Activated CD4-positive, alpha-beta memory T cell treated with anti-CD3 and anti-CD28 coated beads for 36 hours (primary cell): ENCODE measurements at regions of chr3 and their contacts with region 1.

Region 1: GRCh38 chr3:101936419-101937356 is 87.4 kb downstream of the NFKBIZ start:
- DNase-seq: peak; percentile 65
- H3K4me3 Mint-ChIP-seq: peak overlapping the region; percentile 36
- H3K27ac Mint-ChIP-seq: peak overlapping the region; percentile 50
- H3K4me1 Mint-ChIP-seq: peaks cover 25% of the 10 kb centered on the region
- H3K27me3 Mint-ChIP-seq: peaks cover 15% of the 10 kb centered on the region

Region 2: DNA sequence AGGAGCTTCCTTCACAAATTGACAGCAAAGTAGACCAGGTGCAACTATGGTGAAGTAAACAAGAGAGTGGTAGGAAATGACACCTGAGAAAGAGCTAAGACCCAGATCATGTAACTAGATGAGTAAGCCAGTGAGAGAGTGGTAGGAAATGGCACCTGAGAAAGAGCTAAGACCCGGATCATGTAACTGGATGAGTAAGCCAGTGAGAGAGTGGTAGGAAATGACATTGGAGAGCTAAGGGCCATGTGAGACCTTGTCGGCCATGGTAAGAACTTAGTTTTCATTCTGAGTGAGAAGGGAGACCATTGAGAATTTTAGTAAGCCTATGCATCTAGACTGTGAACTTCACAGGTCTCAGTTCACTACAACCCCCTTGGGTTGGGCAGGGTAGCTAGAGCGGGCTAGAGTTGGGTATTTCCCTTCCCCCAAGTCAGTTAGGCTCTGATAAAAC is 418.2 kb before region 1 on chr3:
- CTCF ChIA-PET with region 1: no interaction called
- POLR2A ChIA-PET with region 1: no interaction called
- intact Hi-C with region 1: loop called (anchors 5 kb)
- DNase-seq: peak; percentile 69
- H3K4me3 Mint-ChIP-seq: peak overlapping the region; percentile 65
- H3K27ac Mint-ChIP-seq: peak overlapping the region; percentile 93
- H3K4me1 Mint-ChIP-seq: peaks cover 48% of the 10 kb centered on the region
- H3K27me3 Mint-ChIP-seq: no peaks in the 10 kb centered on the region

Region 3: DNA sequence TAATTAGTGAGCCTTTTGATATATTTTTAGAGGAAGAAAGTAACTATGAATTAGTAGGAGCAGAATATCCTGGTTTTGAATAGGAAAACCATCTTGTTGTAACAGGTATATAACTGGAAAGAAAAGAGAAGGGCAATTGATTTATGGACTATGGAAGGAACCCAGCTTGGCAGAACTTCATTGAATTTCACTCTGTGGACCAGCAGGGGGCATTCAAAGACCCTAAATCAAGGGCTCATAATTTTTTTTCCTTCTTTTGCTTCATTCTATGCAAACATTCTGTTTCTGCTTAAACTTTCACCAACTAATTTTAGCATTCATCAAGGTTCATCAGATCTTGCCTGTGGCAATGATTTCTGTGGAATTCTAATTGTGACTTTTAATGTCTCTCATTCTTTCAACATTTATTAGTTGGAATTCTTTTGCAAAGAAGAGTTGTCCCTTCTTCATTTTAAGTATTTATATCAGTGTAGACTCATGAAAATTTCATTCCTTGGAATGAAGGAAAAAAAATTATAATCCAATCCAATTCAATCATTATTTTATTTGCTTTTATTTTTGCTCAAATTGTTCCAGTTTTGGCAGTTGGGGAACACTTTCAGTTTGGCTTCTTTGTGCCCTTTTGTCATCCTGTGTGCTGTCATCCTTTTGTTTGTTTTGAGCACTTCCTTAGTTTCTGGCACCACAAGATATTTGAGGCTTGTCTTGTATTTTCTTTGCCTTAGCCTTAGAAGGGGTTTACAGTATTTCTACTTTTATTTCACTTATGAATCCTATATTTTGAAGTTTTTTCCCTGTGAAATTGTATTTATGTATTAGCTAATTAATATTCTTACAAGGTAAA is 127.3 kb before region 1 on chr3:
- CTCF ChIA-PET with region 1: interaction called, 3 read pairs
- POLR2A ChIA-PET with region 1: no interaction called
- intact Hi-C with region 1: loop called (anchors 2 kb)
- DNase-seq: peak; percentile 31
- H3K4me3 Mint-ChIP-seq: no peak overlapping the region
- H3K27ac Mint-ChIP-seq: no peak overlapping the region
- H3K4me1 Mint-ChIP-seq: peaks cover 43% of the 10 kb centered on the region
- H3K27me3 Mint-ChIP-seq: no peaks in the 10 kb centered on the region

Region 4: DNA sequence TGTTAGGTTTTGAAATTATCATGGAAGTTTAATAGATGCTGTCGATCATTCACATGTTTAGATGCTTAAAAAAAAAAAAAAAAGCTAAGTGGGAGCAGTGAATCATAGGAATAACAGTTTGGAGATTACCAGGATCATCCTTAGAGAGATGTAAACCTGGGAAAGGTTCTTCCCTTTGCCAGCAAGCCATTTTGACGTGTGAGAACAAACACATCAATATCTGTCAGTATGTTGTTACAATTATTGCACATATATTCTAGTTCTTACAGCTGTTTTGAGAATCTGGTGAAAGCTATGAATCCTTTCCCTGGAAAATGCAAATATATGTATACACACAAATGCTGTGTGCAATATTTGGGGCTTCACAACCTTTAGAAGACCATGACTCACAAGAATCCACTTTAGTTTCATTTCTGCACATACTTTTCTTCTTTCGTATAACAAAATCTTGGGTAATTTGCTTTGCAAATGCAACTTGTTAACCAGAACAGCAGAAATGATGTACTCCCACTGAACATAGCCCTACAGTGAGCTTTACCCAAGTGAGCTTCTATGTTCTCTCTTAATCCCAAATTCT is 75.4 kb before region 1 on chr3:
- CTCF ChIA-PET with region 1: no interaction called
- POLR2A ChIA-PET with region 1: no interaction called
- intact Hi-C with region 1: loop called (anchors 1 kb)
- DNase-seq: no peak
- H3K4me3 Mint-ChIP-seq: no peak overlapping the region
- H3K27ac Mint-ChIP-seq: no peak overlapping the region
- H3K4me1 Mint-ChIP-seq: peaks cover 64% of the 10 kb centered on the region
- H3K27me3 Mint-ChIP-seq: no peaks in the 10 kb centered on the region

Region 5: DNA sequence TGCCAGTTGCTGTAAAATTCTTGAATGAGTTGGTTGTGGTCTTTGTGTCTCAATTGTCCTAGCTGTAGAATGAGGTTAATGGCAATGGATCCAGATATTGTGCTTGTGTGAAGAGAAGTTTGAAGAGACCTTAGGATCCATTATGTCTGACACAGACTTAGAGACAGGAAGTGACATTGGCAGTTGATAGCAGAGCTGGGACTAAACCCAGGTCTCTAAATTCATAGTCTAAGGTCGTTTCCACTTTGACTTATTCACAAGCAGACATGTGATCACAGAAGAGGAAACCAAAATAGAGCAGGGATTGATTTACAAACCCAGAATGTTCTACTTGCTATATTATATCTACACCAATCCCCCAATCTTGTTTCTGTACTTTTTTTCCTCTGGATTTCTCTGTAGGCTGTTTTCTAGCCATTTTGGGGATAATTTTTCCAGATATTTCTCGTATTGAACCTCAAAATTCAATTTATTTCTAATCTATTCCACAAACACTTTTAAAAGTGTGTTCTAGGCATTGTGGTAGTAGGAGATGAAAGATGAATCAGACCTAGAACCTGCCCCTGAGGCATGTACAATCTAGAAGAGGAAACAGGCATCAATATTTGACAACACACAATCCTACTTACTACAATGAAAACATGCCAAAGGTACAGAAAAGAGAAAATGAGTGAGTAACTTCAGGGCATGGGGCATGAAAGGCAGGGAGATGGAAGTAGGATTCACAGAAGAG is 35.9 kb after region 1 on chr3:
- CTCF ChIA-PET with region 1: no interaction called
- POLR2A ChIA-PET with region 1: no interaction called
- intact Hi-C with region 1: no loop called
- DNase-seq: no peak
- H3K4me3 Mint-ChIP-seq: no peak overlapping the region
- H3K27ac Mint-ChIP-seq: no peak overlapping the region
- H3K4me1 Mint-ChIP-seq: no peaks in the 10 kb centered on the region
- H3K27me3 Mint-ChIP-seq: no peaks in the 10 kb centered on the region

Region 6: GRCh38 chr3:101988591-101988990 is 51.9 kb after region 1 on chr3:
- CTCF ChIA-PET with region 1: no interaction called
- POLR2A ChIA-PET with region 1: interaction called, 3 read pairs
- intact Hi-C with region 1: loop called (anchors 2 kb)
- DNase-seq: peak; percentile 40
- H3K4me3 Mint-ChIP-seq: no peak overlapping the region
- H3K27ac Mint-ChIP-seq: no peak overlapping the region
- H3K4me1 Mint-ChIP-seq: peaks cover 29% of the 10 kb centered on the region
- H3K27me3 Mint-ChIP-seq: peaks cover 11% of the 10 kb centered on the region

Region 7: DNA sequence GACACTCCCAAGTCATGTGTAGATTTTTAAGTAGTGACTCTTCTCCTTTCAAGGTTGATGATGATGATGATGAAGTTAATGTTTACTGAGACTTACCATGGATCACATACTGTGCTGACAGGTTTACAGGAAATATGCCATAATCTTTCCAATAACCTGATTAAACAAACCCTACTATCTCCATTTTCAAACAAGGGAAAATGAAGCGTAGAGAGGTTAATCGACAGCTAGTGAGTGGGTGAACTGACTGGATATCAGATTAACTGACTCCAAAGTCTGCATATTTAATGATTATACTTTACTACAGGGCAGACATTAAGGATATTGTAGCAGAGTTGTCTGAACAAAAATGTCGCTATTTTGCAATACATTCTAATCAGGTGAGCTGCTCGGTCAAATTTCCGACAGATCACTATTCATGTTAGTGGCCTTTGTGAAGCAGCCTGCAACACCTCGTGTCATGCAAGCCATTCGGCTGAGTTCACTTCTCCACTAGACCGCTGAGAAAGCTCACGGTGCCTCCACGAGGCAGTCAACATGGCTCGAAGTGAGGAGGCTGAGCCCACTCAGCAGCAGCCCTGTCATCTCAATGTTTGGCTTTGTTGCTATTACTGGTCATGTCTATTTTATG is 176.8 kb after region 1 on chr3:
- CTCF ChIA-PET with region 1: no interaction called
- POLR2A ChIA-PET with region 1: interaction called, 3 read pairs
- intact Hi-C with region 1: loop called (anchors 5 kb)
- DNase-seq: peak; percentile 19
- H3K4me3 Mint-ChIP-seq: no peak overlapping the region
- H3K27ac Mint-ChIP-seq: peak overlapping the region; percentile 72
- H3K4me1 Mint-ChIP-seq: peaks cover 33% of the 10 kb centered on the region
- H3K27me3 Mint-ChIP-seq: no peaks in the 10 kb centered on the region